ENCODE measurements at regions of chr12 and their contacts with region 1.

Region 1: GRCh38 chr12:12704593-12705230 is 8.7 kb upstream of the GPR19 start:
- DNase-seq: peak; percentile 95
- ATAC-seq: peak; percentile 100
- H3K4me3 ChIP-seq: no peak overlapping the region
- H3K27ac ChIP-seq: no peak overlapping the region
- H3K4me1 ChIP-seq: no peaks in the 10 kb centered on the region
- H3K27me3 ChIP-seq: no peaks in the 10 kb centered on the region
- CTCF ChIP-seq: peak; percentile 100; the same call in 1 of the 2 replicates
- POLR2A ChIP-seq: peak; percentile 68; the same call in 1 of the 2 replicates
- RAD21 ChIP-seq: peak; percentile 100

Region 2: GRCh38 chr12:11576104-11576503 is 1128.6 kb before region 1 on chr12:
- CTCF ChIA-PET with region 1: no interaction called
- POLR2A ChIA-PET with region 1: no interaction called
- dilution Hi-C with region 1: no loop called
- in situ Hi-C with region 1: loop called (anchors 10 kb)
- intact Hi-C with region 1: loop called (anchors 1 kb)
- DNase-seq: peak; percentile 48
- ATAC-seq: peak; percentile 14; the same call in 1 of the 2 replicates
- H3K4me3 ChIP-seq: no peak overlapping the region
- H3K27ac ChIP-seq: no peak overlapping the region
- H3K4me1 ChIP-seq: peaks cover 9% of the 10 kb centered on the region
- H3K27me3 ChIP-seq: peaks cover 7% of the 10 kb centered on the region
- CTCF ChIP-seq: no peak
- POLR2A ChIP-seq: no peak
- RAD21 ChIP-seq: no peak

Region 3: DNA sequence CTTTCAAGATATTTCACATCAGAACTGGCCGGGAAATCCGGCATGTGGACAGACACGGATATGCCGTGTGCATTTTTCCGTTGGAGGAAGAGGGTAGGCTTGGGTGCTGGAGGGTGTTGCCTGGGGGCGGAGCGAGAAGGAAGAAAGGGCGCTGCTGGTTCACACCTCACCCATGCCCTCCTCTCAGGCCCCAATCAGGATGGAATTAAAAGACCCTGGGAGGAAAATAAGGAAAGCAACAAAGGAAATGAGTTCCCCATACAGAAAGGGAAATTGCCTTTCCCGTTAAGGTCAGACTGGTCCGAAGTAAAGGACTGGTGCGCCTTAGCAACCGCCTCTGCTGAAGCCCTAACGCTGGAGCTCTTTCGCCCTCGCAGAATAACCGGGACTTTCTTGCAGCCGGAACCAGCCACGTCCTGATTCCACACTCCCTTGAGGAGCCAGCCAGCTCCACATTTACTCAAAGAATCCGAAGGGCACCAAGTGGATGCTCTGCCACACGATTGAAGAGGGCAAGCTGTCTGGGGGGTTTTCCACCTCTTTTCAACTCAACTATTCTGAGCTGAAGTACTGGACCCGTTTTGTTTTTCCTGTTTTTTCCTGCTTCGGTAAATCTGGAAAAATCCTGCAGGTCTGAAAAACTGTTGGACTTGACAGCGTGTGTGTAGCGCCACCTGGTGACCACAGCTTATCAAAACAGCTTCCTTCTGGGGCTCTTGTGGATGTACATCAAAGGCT is 671.7 kb before region 1 on chr12:
- CTCF ChIA-PET with region 1: no interaction called
- POLR2A ChIA-PET with region 1: no interaction called
- dilution Hi-C with region 1: no loop called
- in situ Hi-C with region 1: loop called (anchors 10 kb)
- intact Hi-C with region 1: loop called (anchors 1 kb)
- DNase-seq: peak; percentile 87
- ATAC-seq: peak; percentile 92
- H3K4me3 ChIP-seq: peak overlapping the region; percentile 55
- H3K27ac ChIP-seq: peak overlapping the region; percentile 70
- H3K4me1 ChIP-seq: no peaks in the 10 kb centered on the region
- H3K27me3 ChIP-seq: peaks cover 2% of the 10 kb centered on the region
- CTCF ChIP-seq: peak; percentile 90
- POLR2A ChIP-seq: peak; percentile 58; the same call in 1 of the 2 replicates
- RAD21 ChIP-seq: peak; percentile 96

Region 4: DNA sequence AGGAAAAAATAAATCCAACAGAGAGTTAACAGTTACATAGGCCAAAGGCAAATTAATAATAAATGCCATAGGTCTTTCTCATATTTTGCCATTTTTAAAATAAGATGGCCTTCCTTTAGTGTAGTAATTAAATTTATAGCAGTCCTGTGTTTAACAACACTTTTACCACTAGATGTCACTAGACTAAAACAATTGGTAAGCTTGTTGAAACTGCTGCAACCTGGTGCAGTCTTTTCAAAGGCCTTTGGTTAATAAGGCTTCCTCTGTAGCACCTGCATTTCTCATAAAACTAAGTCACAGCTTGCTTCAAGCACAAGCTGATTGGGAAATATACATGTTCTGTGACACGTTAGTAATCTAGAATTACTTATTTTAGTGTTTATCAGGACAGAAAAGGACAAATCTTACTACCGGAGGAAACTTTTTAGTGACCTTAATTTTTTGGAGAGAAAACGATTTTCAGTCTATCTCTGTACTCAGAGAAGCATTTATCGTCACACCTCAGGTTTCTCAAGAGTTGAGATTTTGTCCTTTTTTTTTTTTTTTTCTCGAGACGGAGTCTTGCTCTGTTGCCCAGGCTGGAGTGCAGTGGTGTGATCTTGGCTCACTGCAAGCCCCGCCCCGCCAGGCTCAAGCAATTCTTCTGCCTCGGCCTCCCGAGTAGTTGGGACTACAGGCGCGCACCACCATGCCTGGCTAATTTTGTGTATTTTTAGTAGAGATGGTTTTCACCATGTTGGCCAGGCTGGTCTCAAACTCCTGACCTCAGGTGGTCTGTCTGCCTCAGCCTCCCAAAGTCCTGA is 327.9 kb before region 1 on chr12:
- CTCF ChIA-PET with region 1: interaction called, 3 read pairs
- POLR2A ChIA-PET with region 1: no interaction called
- dilution Hi-C with region 1: no loop called
- in situ Hi-C with region 1: loop called (anchors 10 kb)
- intact Hi-C with region 1: loop called (anchors 1 kb)
- DNase-seq: peak; percentile 86
- ATAC-seq: peak; percentile 95
- H3K4me3 ChIP-seq: no peak overlapping the region
- H3K27ac ChIP-seq: no peak overlapping the region
- H3K4me1 ChIP-seq: peaks cover 2% of the 10 kb centered on the region; the same call in 1 of the 2 replicates
- H3K27me3 ChIP-seq: no peaks in the 10 kb centered on the region
- CTCF ChIP-seq: peak; percentile 89
- POLR2A ChIP-seq: 0 out of 2 replicates have a peak, but pooled peaks have one; percentile 38
- RAD21 ChIP-seq: peak; percentile 97

Region 5: DNA sequence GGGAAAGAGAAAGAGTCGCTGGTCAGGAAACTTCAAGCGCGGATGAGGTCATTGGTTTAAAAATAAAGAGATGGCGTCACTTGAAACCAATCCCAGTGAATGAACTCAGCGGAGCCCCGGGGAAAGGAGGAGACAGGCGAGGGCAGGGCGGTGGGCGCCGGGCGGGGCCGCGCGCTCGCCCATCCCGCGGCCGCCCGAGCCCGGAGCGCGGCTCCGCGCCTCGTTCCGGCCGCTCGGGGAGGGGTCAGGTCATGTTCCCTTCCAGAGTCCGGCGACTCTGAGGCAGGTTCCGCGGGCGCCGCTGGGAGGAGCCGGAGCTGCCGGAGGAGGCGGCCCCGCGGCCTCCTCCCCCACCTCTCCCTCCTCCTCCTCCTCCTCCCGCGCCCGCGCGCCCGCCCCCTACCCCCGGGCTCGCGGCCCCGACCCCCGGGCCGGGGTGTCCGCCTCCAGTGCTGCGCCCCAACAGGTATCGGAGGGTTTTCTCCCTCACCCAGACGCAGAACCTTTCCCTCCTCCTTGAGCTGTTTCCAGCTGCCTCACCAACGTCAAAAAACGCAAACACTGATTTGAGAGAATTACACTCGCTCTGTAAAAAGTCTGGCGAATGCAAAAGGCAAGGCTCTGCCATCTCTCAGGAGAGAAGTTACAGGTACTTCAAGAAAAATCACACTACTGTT is 142.0 kb before region 1 on chr12 and contains the start of gene DUSP16:
- CTCF ChIA-PET with region 1: interaction called, 3 read pairs
- POLR2A ChIA-PET with region 1: no interaction called
- dilution Hi-C with region 1: no loop called
- in situ Hi-C with region 1: no loop called
- intact Hi-C with region 1: loop called (anchors 2 kb)
- DNase-seq: peak; percentile 95
- ATAC-seq: peak; percentile 96
- H3K4me3 ChIP-seq: peak within 1 kb of the TSS; percentile 99
- H3K27ac ChIP-seq: peak within 1 kb of the TSS; percentile 100
- H3K4me1 ChIP-seq: peaks cover 2% of the 10 kb centered on the region; the same call in 1 of the 2 replicates
- H3K27me3 ChIP-seq: peaks cover 2% of the 10 kb centered on the region; the same call in 1 of the 2 replicates
- CTCF ChIP-seq: peak; percentile 14; the same call in 1 of the 2 replicates
- POLR2A ChIP-seq: peak; percentile 37
- RAD21 ChIP-seq: no peak
- total RNA-seq, gene DUSP16: 10.0 and 10.6 TPM in 2 replicates

Measured in IMR-90 (cell line).